Calu3 (cell line): ENCODE measurements at regions of chr11 and their contacts with region 1.

Region 1: GRCh38 chr11:9460322-9461067 is at the start of gene ZNF143:
- DNase-seq: peak; percentile 99
- H3K4me3 Mint-ChIP-seq: peak within 1 kb of the TSS; percentile 98
- H3K27ac Mint-ChIP-seq: peak within 1 kb of the TSS; percentile 100
- H3K4me1 Mint-ChIP-seq: peaks cover 13% of the 10 kb centered on the region
- H3K27me3 Mint-ChIP-seq: no peaks in the 10 kb centered on the region
- CTCF ChIP-seq: no peak
- total RNA-seq, gene ZNF143: 20.4 and 28.7 TPM in 2 replicates

Region 2: DNA sequence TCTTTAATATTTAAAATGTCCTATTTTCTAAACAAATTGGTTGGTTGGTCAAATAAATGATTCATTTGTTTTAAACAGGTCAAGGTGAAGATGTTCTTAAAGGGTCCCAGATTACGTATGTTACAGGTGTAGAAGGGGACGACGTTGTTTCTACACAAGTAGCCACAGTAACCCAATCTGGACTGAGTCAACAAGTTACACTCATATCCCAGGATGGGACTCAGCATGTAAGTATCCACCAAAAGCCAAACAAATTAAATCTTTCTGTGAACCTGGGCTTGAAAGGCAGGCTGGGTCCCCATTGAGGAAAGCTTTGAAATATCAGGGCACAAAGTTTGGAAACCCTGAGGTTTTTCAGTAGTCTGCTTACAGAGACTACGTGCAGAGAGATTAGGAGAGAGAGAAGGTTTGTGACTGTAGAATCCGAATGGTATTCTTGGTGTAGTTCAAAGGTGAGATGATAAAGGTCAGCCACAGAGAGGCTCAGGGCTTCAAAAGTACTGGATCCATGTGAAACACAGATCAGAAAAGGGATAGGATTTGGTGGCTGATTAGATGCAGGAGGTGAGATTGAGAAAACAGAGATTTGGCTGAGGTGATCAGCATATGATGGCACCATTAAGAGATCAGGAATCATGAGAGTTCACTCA is 52.0 kb after region 1 on chr11:
- CTCF ChIA-PET with region 1: no interaction called
- intact Hi-C with region 1: loop called (anchors 5 kb)
- DNase-seq: no peak
- H3K4me3 Mint-ChIP-seq: no peak overlapping the region
- H3K27ac Mint-ChIP-seq: peak overlapping the region; percentile 8
- H3K4me1 Mint-ChIP-seq: peaks cover 47% of the 10 kb centered on the region
- H3K27me3 Mint-ChIP-seq: no peaks in the 10 kb centered on the region
- CTCF ChIP-seq: no peak

Region 3: GRCh38 chr11:9568854-9569587 is 108.5 kb after region 1 on chr11:
- CTCF ChIA-PET with region 1: no interaction called
- intact Hi-C with region 1: loop called (anchors 2 kb)
- DNase-seq: peak; percentile 74
- H3K4me3 Mint-ChIP-seq: peak overlapping the region; percentile 65
- H3K27ac Mint-ChIP-seq: peak overlapping the region; percentile 100
- H3K4me1 Mint-ChIP-seq: peaks cover 68% of the 10 kb centered on the region
- H3K27me3 Mint-ChIP-seq: no peaks in the 10 kb centered on the region
- CTCF ChIP-seq: no peak